ENCODE measurements at regions of chr15 and their contacts with region 1.

Region 1: GRCh38 chr15:60191015-60191414 is 186.9 kb downstream of the FOXB1 start:
- DNase-seq: no peak
- H3K4me3 ChIP-seq: no peak overlapping the region
- H3K27ac ChIP-seq: no peak overlapping the region
- H3K4me1 ChIP-seq: no peaks in the 10 kb centered on the region
- H3K27me3 ChIP-seq: peaks cover 3 to 12% of the 10 kb centered on the region in 2 experiments
- CTCF ChIP-seq: no peak
- POLR2A ChIP-seq: no peak

Region 2: DNA sequence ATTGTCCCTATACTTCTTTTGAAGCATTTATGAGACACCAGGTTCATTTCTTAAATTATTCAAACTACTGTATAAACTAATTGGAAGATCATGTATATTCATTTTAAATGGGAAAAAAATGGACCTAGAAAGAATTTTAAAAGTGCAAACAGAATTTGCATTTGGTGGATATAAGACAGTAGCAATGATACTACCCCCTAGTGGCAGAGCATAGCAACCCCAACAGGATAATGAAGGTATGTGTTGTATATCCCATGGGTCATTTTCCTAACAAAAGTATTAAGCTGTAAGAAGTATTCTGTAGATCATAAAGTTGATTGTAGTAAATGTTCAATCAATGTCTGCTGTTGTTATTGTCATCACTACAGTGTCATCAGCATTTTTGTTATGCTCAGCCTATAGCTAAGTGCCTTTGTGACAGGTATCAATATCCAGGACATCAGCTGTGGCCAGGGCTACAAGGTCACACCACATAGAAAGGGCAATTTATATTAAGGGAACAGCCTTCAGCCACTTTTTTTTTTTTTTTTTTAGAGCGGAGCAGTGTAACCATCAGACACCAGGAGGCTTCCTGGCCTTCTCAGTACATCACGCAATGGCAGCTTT is 11.1 kb before region 1 on chr15:
- CTCF ChIA-PET with region 1: interaction called, 21 read pairs
- POLR2A ChIA-PET with region 1: no interaction called
- dilution Hi-C with region 1: no loop called
- intact Hi-C with region 1: no loop called
- DNase-seq: peak; percentile 44
- H3K4me3 ChIP-seq: no peak overlapping the region
- H3K27ac ChIP-seq: no peak overlapping the region
- H3K4me1 ChIP-seq: no peaks in the 10 kb centered on the region
- H3K27me3 ChIP-seq: peaks cover 2 to 10% of the 10 kb centered on the region in 2 experiments
- CTCF ChIP-seq: peak; percentile 70 to 73
- POLR2A ChIP-seq: no peak

Region 3: GRCh38 chr15:60237421-60237820 is 46.4 kb after region 1 on chr15:
- CTCF ChIA-PET with region 1: no interaction called
- POLR2A ChIA-PET with region 1: no interaction called
- dilution Hi-C with region 1: no loop called
- intact Hi-C with region 1: no loop called
- DNase-seq: no peak
- H3K4me3 ChIP-seq: no peak overlapping the region
- H3K27ac ChIP-seq: no peak overlapping the region
- H3K4me1 ChIP-seq: no peaks in the 10 kb centered on the region
- H3K27me3 ChIP-seq: peaks cover 0 to 4% of the 10 kb centered on the region in 2 experiments
- CTCF ChIP-seq: no peak
- POLR2A ChIP-seq: no peak

Measured in endothelial cell of umbilical vein (primary cell).